Breast epithelium (tissue), 4 donors: ENCODE measurements at regions of chr1 and their contacts with region 1.

Region 1: DNA sequence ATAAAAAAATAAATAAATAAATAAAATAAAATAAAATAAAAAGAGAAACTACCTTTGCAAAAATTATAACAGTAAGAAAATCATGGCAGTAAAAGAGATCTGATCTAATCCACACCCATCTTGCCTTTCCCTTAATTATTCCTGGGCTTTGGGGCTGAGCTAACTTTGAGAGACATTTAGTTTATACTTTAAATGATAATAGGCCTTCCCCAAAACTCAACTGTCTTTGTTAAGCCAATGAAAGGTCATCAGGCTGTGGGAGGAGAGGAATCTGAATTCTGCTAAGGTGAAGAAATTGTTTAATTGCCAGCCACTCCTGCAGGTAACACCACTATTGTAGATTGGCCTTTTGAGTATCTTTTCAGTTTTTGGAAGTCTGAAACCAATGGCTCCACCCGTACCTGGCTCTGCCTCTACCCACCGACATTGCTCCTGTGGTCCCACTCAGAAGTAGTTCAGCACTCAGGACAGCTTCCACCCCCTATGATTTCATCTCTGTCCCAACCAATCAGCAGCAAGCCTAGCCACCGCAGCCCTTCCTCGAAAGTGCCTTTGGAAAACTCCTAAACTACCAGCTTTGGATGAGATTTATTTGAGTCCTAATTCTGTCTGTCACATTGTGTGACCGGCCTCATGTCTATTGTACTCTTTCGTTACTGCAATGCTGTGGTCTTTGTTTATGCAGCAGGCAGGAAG is 23.0 kb upstream of the PNRC2 start:
- DNase-seq: no peak
- H3K4me3 ChIP-seq: no peak overlapping the region
- H3K27ac ChIP-seq: no peak overlapping the region
- H3K4me1 ChIP-seq: no peaks in the 10 kb centered on the region
- H3K27me3 ChIP-seq: no peaks in the 10 kb centered on the region
- CTCF ChIP-seq: no peak
- POLR2A ChIP-seq: no peak

Region 2: DNA sequence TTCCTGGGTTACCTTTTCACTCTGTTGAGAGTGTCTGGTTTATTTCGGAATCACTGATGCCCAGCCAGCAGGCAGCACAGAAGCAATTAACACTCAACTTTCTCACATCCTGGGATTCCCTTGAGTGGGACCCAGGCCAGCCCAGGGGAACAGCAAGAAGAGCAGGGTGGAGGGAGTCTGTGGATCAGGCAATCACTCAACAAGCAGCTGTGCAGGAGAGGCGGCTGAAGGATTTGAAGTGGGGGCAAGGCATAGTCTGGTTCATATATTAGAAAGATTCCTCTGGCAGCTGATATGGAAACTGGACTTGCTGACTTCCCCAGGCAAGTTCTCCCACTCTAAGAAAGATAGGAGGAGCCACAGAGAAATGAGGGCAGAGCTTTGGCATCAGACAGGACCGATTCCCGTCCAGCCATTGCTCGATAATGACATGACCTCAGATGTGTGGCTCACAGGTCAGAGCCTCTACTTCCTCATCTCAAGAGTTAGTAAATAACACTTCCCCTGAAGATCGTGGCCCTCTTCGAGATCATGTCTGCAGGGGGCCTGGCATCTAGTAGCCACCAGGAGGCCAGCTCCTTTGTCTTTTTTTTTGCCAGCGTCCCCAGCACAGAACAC is 1361.0 kb before region 1 on chr1:
- intact Hi-C with region 1: no loop called
- DNase-seq: no peak
- H3K4me3 ChIP-seq: no peak overlapping the region
- H3K27ac ChIP-seq: no peak overlapping the region
- H3K4me1 ChIP-seq: no peaks in the 10 kb centered on the region
- H3K27me3 ChIP-seq: peaks cover 0 to 28% of the 10 kb centered on the region in 2 donors
- CTCF ChIP-seq: no peak
- POLR2A ChIP-seq: no peak

Region 3: GRCh38 chr1:24909388-24909898 is 972.8 kb after region 1 on chr1:
- intact Hi-C with region 1: loop called (anchors 5 kb)
- DNase-seq: no peak
- H3K4me3 ChIP-seq: no peak overlapping the region
- H3K27ac ChIP-seq: no peak overlapping the region
- H3K4me1 ChIP-seq: no peaks in the 10 kb centered on the region
- H3K27me3 ChIP-seq: no peaks in the 10 kb centered on the region
- CTCF ChIP-seq: no peak
- POLR2A ChIP-seq: no peak